ENCODE measurements at regions of chr13 and their contacts with region 1.

Region 1: GRCh38 chr13:99501184-99501847 is at the start of gene TM9SF2:
- DNase-seq: peak; percentile 96 to 98 (median 97)
- H3K4me3 ChIP-seq: peak within 1 kb of the TSS; percentile 57 to 72
- H3K4me3 Mint-ChIP-seq: peak within 1 kb of the TSS; percentile 89 to 99 (median 98)
- H3K27ac ChIP-seq: peak within 1 kb of the TSS; percentile 86
- H3K27ac Mint-ChIP-seq: peak within 1 kb of the TSS; percentile 98 to 99 (median 98)
- H3K4me1 ChIP-seq: peaks cover 86% of the 10 kb centered on the region
- H3K4me1 Mint-ChIP-seq: peaks cover 49 to 94% (median 71%) of the 10 kb centered on the region in 4 donors
- H3K27me3 ChIP-seq: no peaks in the 10 kb centered on the region
- H3K27me3 Mint-ChIP-seq: no peaks in the 10 kb centered on the region
- total RNA-seq, gene TM9SF2: 60.0 to 64.2 TPM

Region 2: GRCh38 chr13:98476538-98476966 is 1024.8 kb before region 1 on chr13:
- CTCF ChIA-PET with region 1: no interaction called
- POLR2A ChIA-PET with region 1: no interaction called
- intact Hi-C with region 1: loop called (anchors 5 kb)
- DNase-seq: peak; percentile 84 to 97 (median 86)
- H3K4me3 ChIP-seq: peak overlapping the region; percentile 1 to 21
- H3K4me3 Mint-ChIP-seq: peak overlapping the region; percentile 63 to 80 (median 74)
- H3K27ac ChIP-seq: peak overlapping the region; percentile 78
- H3K27ac Mint-ChIP-seq: peak overlapping the region; percentile 83 to 98 (median 96)
- H3K4me1 ChIP-seq: peaks cover 58% of the 10 kb centered on the region
- H3K4me1 Mint-ChIP-seq: peaks cover 51 to 69% (median 61%) of the 10 kb centered on the region in 4 donors
- H3K27me3 ChIP-seq: no peaks in the 10 kb centered on the region
- H3K27me3 Mint-ChIP-seq: no peaks in the 10 kb centered on the region

Region 3: GRCh38 chr13:99214232-99214631 is 287.1 kb before region 1 on chr13:
- CTCF ChIA-PET with region 1: no interaction called
- POLR2A ChIA-PET with region 1: no interaction called
- intact Hi-C with region 1: loop called (anchors 5 kb)
- DNase-seq: peak in 1 of 5 donors; percentile 61
- H3K4me3 ChIP-seq: peak overlapping the region in 1 of 2 donors; percentile 62
- H3K4me3 Mint-ChIP-seq: peak overlapping the region; percentile 73 to 97 (median 94)
- H3K27ac ChIP-seq: peak overlapping the region; percentile 68
- H3K27ac Mint-ChIP-seq: peak overlapping the region; percentile 96 to 99 (median 99)
- H3K4me1 ChIP-seq: peaks cover 78% of the 10 kb centered on the region
- H3K4me1 Mint-ChIP-seq: peaks cover 55 to 92% (median 74%) of the 10 kb centered on the region in 4 donors
- H3K27me3 ChIP-seq: no peaks in the 10 kb centered on the region
- H3K27me3 Mint-ChIP-seq: no peaks in the 10 kb centered on the region

Region 4: DNA sequence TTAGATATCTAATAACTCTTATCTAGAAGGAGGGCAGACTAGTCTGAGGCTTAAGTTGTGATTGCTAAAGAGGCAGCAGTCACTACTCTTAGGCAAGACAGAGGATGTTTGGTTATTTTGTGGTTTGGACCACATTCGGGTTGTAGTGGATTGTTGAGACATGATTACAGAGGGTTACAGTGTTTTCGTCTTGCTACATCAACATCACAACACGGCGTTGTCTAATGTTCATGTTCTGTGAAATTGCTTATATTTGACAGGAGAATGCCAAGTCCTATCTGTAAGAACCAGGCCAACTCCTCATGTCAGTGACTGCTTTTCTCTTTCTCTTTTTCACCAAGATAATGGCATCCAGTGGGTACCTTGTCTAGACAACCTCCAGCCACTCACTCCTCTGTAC is 16.8 kb before region 1 on chr13:
- CTCF ChIA-PET with region 1: interaction called, 3 read pairs
- POLR2A ChIA-PET with region 1: interaction called, 5 read pairs
- intact Hi-C with region 1: loop called (anchors 2 kb)
- DNase-seq: peak in 4 of 5 donors; percentile 20 to 39 (median 30)
- H3K4me3 ChIP-seq: no peak overlapping the region
- H3K4me3 Mint-ChIP-seq: peak overlapping the region in 4 of 8 donors; percentile 10 to 44 (median 30)
- H3K27ac ChIP-seq: no peak overlapping the region
- H3K27ac Mint-ChIP-seq: peak overlapping the region; percentile 25 to 77 (median 55)
- H3K4me1 ChIP-seq: peaks cover 13% of the 10 kb centered on the region
- H3K4me1 Mint-ChIP-seq: peaks cover 8 to 18% (median 13%) of the 10 kb centered on the region in 4 donors
- H3K27me3 ChIP-seq: no peaks in the 10 kb centered on the region
- H3K27me3 Mint-ChIP-seq: no peaks in the 10 kb centered on the region

Region 5: GRCh38 chr13:99542788-99543406 is 41.6 kb after region 1 on chr13:
- CTCF ChIA-PET with region 1: interaction called, 5 read pairs
- POLR2A ChIA-PET with region 1: interaction called, 9 read pairs
- intact Hi-C with region 1: loop called (anchors 5 kb)
- DNase-seq: peak; percentile 26 to 46 (median 42)
- H3K4me3 ChIP-seq: peak overlapping the region; percentile 12 to 47
- H3K4me3 Mint-ChIP-seq: peak overlapping the region; percentile 43 to 78 (median 72)
- H3K27ac ChIP-seq: peak overlapping the region; percentile 31
- H3K27ac Mint-ChIP-seq: peak overlapping the region; percentile 36 to 92 (median 78)
- H3K4me1 ChIP-seq: peaks cover 71% of the 10 kb centered on the region
- H3K4me1 Mint-ChIP-seq: peaks cover 38 to 73% (median 53%) of the 10 kb centered on the region in 4 donors
- H3K27me3 ChIP-seq: no peaks in the 10 kb centered on the region
- H3K27me3 Mint-ChIP-seq: no peaks in the 10 kb centered on the region

Measured in CD4-positive, alpha-beta memory T cell (primary cell).